Activated T-helper 1 cell treated with anti-CD3 and anti-CD28 coated beads, Interleukin-12 subunit alpha, Interleukin-12 subunit beta, Interleukin-2, Interleukin-4 antibody, amounts not matched to agents 30 ng/mL and 10 ng/mL and 1 ng/mL, durations not matched to agents 14 hours and 24 hours and 36 hours (primary cell): ENCODE measurements at regions of chr21 and their contacts with region 1.

Region 1: GRCh38 chr21:28745131-28746016 is 247.3 kb downstream of the LTN1 start:
- DNase-seq: peak; percentile 46
- H3K4me3 Mint-ChIP-seq: no peak overlapping the region
- H3K27ac Mint-ChIP-seq: no peak overlapping the region
- H3K4me1 Mint-ChIP-seq: no peaks in the 10 kb centered on the region
- H3K27me3 Mint-ChIP-seq: no peaks in the 10 kb centered on the region

Region 2: DNA sequence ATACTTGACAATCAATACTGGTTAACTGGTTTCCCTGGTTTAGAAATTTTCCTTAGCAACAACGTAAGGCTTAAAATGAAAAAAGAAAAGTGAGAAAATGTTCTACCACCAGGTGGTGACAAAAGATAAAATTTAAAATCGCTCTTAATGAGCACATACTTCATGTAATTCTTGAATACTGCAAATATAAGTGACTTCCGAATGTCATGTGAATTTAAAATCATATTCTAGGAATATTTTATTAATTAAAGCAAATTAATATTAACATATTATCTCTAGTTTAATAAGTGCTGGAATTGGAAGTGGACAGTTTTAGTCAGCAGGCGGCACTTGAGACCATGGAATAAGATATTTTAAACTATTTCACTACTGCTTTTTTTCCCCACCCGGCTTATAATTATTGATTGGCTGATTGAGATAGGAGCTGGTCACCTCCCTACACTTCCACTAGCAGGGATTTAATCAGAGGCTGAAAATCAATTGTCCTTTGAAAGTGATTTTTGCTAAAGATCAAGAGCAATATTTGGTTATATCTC is 1895.2 kb before region 1 on chr21:
- intact Hi-C with region 1: loop called (anchors 1 kb)
- DNase-seq: no peak
- H3K4me3 Mint-ChIP-seq: no peak overlapping the region
- H3K27ac Mint-ChIP-seq: no peak overlapping the region
- H3K4me1 Mint-ChIP-seq: peaks cover 20% of the 10 kb centered on the region
- H3K27me3 Mint-ChIP-seq: peaks cover 38% of the 10 kb centered on the region

Region 3: GRCh38 chr21:28069450-28069923 is 675.9 kb before region 1 on chr21:
- intact Hi-C with region 1: loop called (anchors 10 kb)
- DNase-seq: no peak
- H3K4me3 Mint-ChIP-seq: no peak overlapping the region
- H3K27ac Mint-ChIP-seq: no peak overlapping the region
- H3K4me1 Mint-ChIP-seq: no peaks in the 10 kb centered on the region
- H3K27me3 Mint-ChIP-seq: no peaks in the 10 kb centered on the region

Region 4: DNA sequence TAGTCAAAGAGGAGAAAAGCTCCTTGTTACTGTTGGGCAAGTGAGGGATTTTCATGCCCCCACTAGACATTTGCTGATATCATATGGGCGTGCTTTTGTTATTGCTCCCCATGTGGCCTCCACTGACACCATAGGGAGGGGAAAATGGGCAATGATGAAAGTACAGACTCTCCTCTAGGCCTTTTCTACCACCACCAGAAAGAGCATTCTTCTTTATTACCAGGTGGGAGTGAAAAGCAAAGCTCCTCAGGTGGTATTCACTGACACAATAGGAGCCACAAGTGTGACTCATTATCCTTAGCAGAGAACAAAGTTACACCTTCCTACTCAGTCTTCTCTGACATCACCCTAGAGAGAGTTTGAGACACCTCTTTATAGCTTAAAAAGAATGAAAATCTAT is 419.8 kb before region 1 on chr21:
- intact Hi-C with region 1: no loop called
- DNase-seq: no peak
- H3K4me3 Mint-ChIP-seq: no peak overlapping the region
- H3K27ac Mint-ChIP-seq: no peak overlapping the region
- H3K4me1 Mint-ChIP-seq: no peaks in the 10 kb centered on the region
- H3K27me3 Mint-ChIP-seq: no peaks in the 10 kb centered on the region

Region 5: GRCh38 chr21:28516991-28517592 is 228.3 kb before region 1 on chr21:
- intact Hi-C with region 1: loop called (anchors 1 kb)
- DNase-seq: peak; percentile 43
- H3K4me3 Mint-ChIP-seq: no peak overlapping the region
- H3K27ac Mint-ChIP-seq: no peak overlapping the region
- H3K4me1 Mint-ChIP-seq: peaks cover 4% of the 10 kb centered on the region
- H3K27me3 Mint-ChIP-seq: peaks cover 2% of the 10 kb centered on the region